B cell (primary cell): ENCODE measurements at regions of chr15 and their contacts with region 1.

Region 1: DNA sequence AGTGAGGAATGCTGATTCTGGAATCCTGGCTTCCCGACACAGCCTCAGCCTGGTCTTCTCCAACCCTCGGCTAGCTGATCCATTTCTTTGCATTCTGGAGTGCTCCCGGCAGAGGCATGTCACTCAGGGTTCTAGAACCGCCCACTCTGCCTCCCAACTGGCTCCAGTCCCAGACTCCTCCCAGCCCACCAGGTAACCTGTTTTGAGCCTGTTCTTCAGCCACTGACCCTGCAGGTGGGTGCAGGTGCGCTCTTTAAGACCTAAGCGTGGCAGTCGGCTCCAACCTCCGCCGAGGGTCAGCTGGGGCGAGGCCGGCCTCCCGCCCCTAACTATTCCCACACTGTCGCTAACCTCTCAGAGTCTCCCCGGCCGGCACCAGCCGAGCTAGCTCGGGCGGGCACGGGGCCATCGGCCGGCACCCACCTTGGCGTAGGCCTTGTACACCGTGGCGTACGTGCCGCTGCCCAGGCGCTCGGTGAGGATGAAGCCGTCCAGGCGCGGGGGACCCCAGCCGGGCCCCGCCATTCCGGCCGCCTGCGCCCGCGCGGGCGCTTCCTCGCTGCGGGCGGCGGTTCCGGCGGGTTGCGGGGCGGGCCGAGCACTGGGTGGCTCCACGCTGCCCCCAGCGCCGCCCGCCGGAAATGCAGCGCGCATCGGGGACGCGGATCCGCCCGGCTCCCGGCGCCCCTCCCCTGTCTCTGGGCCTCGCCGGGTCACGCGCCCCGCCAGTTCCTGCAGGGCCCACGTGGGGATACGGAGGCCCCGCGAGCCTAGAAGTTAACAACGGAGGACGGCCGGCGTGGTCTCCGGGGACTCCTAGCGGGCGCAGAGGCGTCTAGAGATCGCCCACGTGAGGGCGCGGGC is at the start of gene ULK3:
- DNase-seq: peak; percentile 95
- ATAC-seq: peak; percentile 95
- H3K4me3 ChIP-seq: peak within 1 kb of the TSS; percentile 65 to 88 (median 72)
- H3K4me3 Mint-ChIP-seq: peak within 1 kb of the TSS; percentile 91
- H3K27ac ChIP-seq: peak within 1 kb of the TSS; percentile 78 to 81
- H3K27ac Mint-ChIP-seq: peak within 1 kb of the TSS; percentile 92
- H3K4me1 ChIP-seq: peaks cover 26 to 40% of the 10 kb centered on the region in 2 donors
- H3K4me1 Mint-ChIP-seq: peaks cover 43% of the 10 kb centered on the region
- H3K27me3 ChIP-seq: no peaks in the 10 kb centered on the region
- H3K27me3 Mint-ChIP-seq: no peaks in the 10 kb centered on the region
- CTCF ChIP-seq: peak; percentile 80
- total RNA-seq, gene ULK3: 51.1 and 55.9 TPM in 2 replicates

Region 2: GRCh38 chr15:74615508-74616365 is 227.1 kb before region 1 on chr15 and contains the start of gene CLK3:
- CTCF ChIA-PET with region 1: interaction called, 5 read pairs
- POLR2A ChIA-PET with region 1: no interaction called
- intact Hi-C with region 1: loop called (anchors 1 kb)
- DNase-seq: peak; percentile 96
- ATAC-seq: peak; percentile 80
- H3K4me3 ChIP-seq: peak within 1 kb of the TSS; percentile 50 to 100 (median 100)
- H3K4me3 Mint-ChIP-seq: peak within 1 kb of the TSS; percentile 92
- H3K27ac ChIP-seq: peak within 1 kb of the TSS; percentile 99
- H3K27ac Mint-ChIP-seq: peak within 1 kb of the TSS; percentile 97
- H3K4me1 ChIP-seq: peaks cover 18 to 39% of the 10 kb centered on the region in 2 donors
- H3K4me1 Mint-ChIP-seq: peaks cover 37% of the 10 kb centered on the region
- H3K27me3 ChIP-seq: no peaks in the 10 kb centered on the region
- H3K27me3 Mint-ChIP-seq: no peaks in the 10 kb centered on the region
- CTCF ChIP-seq: no peak
- total RNA-seq, gene CLK3: 164 and 176 TPM in 2 replicates

Region 3: DNA sequence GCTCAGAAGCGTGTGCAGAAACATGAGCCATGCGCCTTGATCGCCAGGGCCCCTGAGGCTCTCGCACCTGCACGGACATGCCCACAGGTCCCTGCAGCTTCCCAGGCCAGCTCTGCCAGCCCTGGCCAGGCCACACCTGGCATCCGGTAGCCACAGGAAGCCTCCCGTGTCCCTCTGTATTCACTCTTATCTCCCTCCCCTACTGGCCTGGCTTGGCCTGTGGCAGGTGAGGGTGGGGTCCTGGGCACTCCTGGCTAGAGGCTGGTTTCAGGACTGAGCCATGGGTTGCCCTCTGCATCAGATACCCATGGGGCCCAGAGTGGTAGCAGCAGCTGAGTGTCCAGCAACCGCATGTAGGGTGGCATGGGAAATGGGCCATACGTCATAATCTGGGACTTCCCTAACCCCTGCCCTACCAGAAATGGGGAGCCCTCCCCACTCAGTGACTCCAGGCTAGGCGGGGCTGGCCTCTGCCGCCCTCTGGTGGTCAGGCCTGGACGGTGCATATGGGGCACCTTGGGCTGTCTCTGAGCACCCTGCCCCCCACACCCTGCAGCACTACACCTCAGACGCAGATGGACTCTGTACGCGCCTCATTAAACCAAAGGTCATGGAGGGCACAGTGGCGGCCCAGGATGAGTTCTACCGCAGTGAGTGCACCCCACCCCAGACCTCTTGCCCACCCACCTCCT is 42.8 kb before region 1 on chr15:
- CTCF ChIA-PET with region 1: interaction called, 17 read pairs
- POLR2A ChIA-PET with region 1: interaction called, 4 read pairs
- intact Hi-C with region 1: loop called (anchors 2 kb)
- DNase-seq: peak; percentile 94
- ATAC-seq: peak; percentile 90
- H3K4me3 ChIP-seq: no peak overlapping the region
- H3K4me3 Mint-ChIP-seq: peak overlapping the region; percentile 78
- H3K27ac ChIP-seq: peak overlapping the region; percentile 89 to 93
- H3K27ac Mint-ChIP-seq: peak overlapping the region; percentile 90
- H3K4me1 ChIP-seq: peaks cover 56 to 61% of the 10 kb centered on the region in 2 donors
- H3K4me1 Mint-ChIP-seq: peaks cover 52% of the 10 kb centered on the region
- H3K27me3 ChIP-seq: no peaks in the 10 kb centered on the region
- H3K27me3 Mint-ChIP-seq: no peaks in the 10 kb centered on the region
- CTCF ChIP-seq: peak; percentile 93

Region 4: DNA sequence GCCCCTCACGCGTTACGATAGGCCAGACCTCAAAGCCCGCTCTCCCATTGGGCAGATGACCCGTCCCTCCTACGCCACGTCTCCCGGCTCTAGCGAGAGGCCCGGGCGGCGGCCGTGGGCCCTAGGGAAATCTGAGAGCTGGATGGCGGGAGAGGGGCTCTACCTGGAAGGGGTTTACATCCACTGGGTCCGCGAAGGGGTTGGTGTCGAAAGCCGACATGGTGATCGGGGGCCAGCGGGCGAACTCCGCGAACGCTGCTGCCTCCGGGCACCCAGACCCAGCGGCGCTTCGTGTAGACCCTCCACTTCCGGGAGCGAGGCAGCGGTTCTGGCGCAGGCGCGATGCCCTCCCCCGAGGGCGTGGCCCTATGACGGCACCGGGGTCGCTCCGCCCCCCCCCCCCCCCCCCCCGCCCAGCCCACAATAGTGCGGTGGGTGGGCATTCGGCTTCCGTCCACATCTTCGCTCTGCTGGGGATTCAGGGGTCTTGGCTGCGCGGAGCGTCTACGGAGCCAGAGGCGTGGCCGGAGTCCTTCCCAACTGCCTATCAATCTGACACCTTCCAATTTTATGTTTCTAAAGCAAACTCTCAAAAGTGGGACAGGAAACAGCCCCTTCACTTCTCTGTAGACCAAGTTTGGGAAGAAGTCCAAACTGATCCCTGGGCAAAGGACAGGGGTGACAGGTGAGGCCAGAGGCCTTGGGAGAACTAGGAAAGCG is 30.4 kb after region 1 on chr15 and contains the start of gene SCAMP2:
- CTCF ChIA-PET with region 1: interaction called, 5 read pairs
- POLR2A ChIA-PET with region 1: interaction called, 4 read pairs
- intact Hi-C with region 1: loop called (anchors 1 kb)
- DNase-seq: peak; percentile 96
- ATAC-seq: peak; percentile 96
- H3K4me3 ChIP-seq: peak within 1 kb of the TSS; percentile 64 to 91 (median 83)
- H3K4me3 Mint-ChIP-seq: peak within 1 kb of the TSS; percentile 95
- H3K27ac ChIP-seq: peak within 1 kb of the TSS; percentile 94 to 95
- H3K27ac Mint-ChIP-seq: peak within 1 kb of the TSS; percentile 98
- H3K4me1 ChIP-seq: peaks cover 37 to 52% of the 10 kb centered on the region in 2 donors
- H3K4me1 Mint-ChIP-seq: peaks cover 42% of the 10 kb centered on the region
- H3K27me3 ChIP-seq: no peaks in the 10 kb centered on the region
- H3K27me3 Mint-ChIP-seq: no peaks in the 10 kb centered on the region
- CTCF ChIP-seq: no peak
- total RNA-seq, gene SCAMP2: 105 and 111 TPM in 2 replicates

Region 5: DNA sequence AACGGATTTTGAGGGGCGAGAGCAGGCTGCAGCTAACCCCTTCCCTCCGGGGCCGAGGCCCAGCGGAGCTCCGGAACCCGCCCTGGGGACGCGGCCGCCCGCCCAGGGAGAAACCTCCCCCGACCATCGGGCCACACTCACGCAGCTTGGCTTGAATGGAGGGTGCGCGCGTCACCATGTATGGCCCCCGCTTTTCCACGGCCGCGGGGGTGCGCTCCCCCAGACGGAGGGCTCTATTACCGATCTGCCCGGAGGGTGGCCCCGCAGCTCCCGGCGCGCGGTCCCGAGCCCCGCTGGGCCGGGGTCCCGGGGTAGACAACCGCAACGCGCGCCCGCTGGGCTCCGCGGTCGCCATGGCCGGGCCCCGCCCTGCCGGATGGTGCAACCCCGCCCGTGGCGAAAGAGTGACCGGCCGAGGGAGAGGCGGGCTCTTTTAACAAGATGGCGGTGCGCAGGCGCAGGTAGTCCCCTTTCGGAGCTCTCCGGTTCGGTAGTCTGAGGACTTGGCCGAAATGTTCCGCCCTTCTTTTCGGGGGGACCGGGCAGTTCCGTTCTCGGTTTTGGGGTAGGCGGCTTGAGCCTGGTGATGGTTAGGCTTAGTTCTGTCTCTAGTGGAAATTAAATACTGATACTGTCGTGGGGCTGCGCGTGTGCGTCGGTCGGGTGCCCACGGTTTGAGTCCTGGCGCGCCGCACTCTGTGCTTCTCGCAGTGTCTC is 63.8 kb after region 1 on chr15 and contains the start of gene FAM219B:
- CTCF ChIA-PET with region 1: interaction called, 15 read pairs
- POLR2A ChIA-PET with region 1: no interaction called
- intact Hi-C with region 1: loop called (anchors 1 kb)
- DNase-seq: peak; percentile 86
- ATAC-seq: peak; percentile 90
- H3K4me3 ChIP-seq: peak within 1 kb of the TSS; percentile 73 to 89 (median 85)
- H3K4me3 Mint-ChIP-seq: peak within 1 kb of the TSS; percentile 98
- H3K27ac ChIP-seq: peak within 1 kb of the TSS; percentile 48 to 79
- H3K27ac Mint-ChIP-seq: peak within 1 kb of the TSS; percentile 98
- H3K4me1 ChIP-seq: peaks cover 19 to 23% of the 10 kb centered on the region in 2 donors
- H3K4me1 Mint-ChIP-seq: peaks cover 45% of the 10 kb centered on the region
- H3K27me3 ChIP-seq: no peaks in the 10 kb centered on the region
- H3K27me3 Mint-ChIP-seq: no peaks in the 10 kb centered on the region
- CTCF ChIP-seq: no peak
- total RNA-seq, gene FAM219B: 109 and 135 TPM in 2 replicates

Region 6: DNA sequence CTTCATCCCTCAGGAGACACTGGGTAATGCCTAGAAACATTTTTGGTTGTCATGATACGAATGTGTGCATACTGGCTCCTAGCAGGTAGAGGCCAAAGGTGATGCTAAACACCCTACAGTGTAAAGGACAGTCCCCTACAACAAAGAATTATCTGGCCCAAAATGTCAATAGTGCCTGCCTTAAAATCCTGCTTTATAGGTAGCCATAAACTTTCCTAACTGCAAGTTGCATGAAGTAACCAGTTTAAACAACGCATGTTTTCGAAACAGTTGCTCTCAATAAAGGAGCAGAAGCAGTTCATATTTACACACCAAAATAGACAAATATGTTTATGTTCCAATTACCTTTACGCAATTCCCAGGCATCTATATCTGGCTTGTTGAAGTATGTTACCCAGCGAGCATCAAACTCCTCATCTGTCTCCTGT is 86.0 kb after region 1 on chr15:
- CTCF ChIA-PET with region 1: no interaction called
- POLR2A ChIA-PET with region 1: no interaction called
- intact Hi-C with region 1: no loop called
- DNase-seq: no peak
- ATAC-seq: no peak
- H3K4me3 ChIP-seq: no peak overlapping the region
- H3K4me3 Mint-ChIP-seq: no peak overlapping the region
- H3K27ac ChIP-seq: no peak overlapping the region
- H3K27ac Mint-ChIP-seq: no peak overlapping the region
- H3K4me1 ChIP-seq: peaks cover 3 to 8% of the 10 kb centered on the region in 2 donors
- H3K4me1 Mint-ChIP-seq: peaks cover 15% of the 10 kb centered on the region
- H3K27me3 ChIP-seq: no peaks in the 10 kb centered on the region
- H3K27me3 Mint-ChIP-seq: no peaks in the 10 kb centered on the region
- CTCF ChIP-seq: no peak